Adrenal gland (tissue), 19 donors: ENCODE measurements at regions of chr10 and their contacts with region 1.

Region 1: GRCh38 chr10:95346715-95347401 is 56.1 kb upstream of the PDLIM1 start:
- DNase-seq: no peak
- H3K4me3 ChIP-seq: no peak overlapping the region
- H3K27ac ChIP-seq: no peak overlapping the region
- H3K4me1 ChIP-seq: peaks cover 7 to 22% of the 10 kb centered on the region in 2 donors
- H3K27me3 ChIP-seq: no peaks in the 10 kb centered on the region
- CTCF ChIP-seq: no peak
- POLR2A ChIP-seq: no peak

Region 2: GRCh38 chr10:95309958-95310357 is 36.9 kb before region 1 on chr10:
- intact Hi-C with region 1: loop called in 1 of 2 experiments (anchors 5 kb)
- DNase-seq: no peak
- H3K4me3 ChIP-seq: no peak overlapping the region
- H3K27ac ChIP-seq: no peak overlapping the region
- H3K4me1 ChIP-seq: peaks cover 0 to 20% of the 10 kb centered on the region in 2 donors
- H3K27me3 ChIP-seq: no peaks in the 10 kb centered on the region
- CTCF ChIP-seq: no peak
- POLR2A ChIP-seq: no peak